Activated naive CD4-positive, alpha-beta T cell treated with anti-CD3 and anti-CD28 coated beads for 36 hours (primary cell): ENCODE measurements at regions of chr18 and their contacts with region 1.

Region 1: DNA sequence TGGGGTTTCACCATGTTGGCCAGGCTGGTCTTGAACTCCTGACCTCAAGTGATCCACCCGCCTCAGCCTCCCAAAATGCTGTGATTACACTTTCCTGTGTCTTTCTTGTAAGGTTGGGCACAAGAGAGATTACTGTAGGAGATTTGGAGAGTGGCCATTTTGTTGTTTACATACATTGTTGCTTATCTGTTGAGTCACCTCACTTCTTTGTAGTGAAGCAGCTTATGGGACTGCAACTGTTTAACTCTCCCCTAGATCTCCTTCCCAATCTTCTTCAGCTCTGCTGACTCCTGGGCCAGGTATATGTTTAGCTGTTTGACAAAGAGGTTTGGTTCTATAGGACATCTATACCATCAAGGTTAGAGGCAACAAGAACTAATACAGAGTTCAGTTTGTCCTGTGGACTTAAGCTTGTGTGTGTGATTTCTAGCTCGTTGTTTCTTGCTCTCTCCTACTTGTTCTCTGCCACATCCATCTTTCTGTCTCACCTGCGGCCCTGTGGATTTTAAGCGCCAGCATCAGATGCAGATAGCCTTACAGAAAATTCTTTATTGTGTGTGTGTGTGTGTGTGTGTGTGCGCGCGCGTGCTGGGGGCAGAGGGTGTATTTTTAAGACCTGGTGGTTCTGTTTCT is 95.4 kb downstream of the HAUS1 start:
- DNase-seq: no peak
- H3K4me3 Mint-ChIP-seq: no peak overlapping the region
- H3K27ac Mint-ChIP-seq: peak overlapping the region; percentile 0
- H3K4me1 Mint-ChIP-seq: peaks cover 67% of the 10 kb centered on the region
- H3K27me3 Mint-ChIP-seq: no peaks in the 10 kb centered on the region

Region 2: DNA sequence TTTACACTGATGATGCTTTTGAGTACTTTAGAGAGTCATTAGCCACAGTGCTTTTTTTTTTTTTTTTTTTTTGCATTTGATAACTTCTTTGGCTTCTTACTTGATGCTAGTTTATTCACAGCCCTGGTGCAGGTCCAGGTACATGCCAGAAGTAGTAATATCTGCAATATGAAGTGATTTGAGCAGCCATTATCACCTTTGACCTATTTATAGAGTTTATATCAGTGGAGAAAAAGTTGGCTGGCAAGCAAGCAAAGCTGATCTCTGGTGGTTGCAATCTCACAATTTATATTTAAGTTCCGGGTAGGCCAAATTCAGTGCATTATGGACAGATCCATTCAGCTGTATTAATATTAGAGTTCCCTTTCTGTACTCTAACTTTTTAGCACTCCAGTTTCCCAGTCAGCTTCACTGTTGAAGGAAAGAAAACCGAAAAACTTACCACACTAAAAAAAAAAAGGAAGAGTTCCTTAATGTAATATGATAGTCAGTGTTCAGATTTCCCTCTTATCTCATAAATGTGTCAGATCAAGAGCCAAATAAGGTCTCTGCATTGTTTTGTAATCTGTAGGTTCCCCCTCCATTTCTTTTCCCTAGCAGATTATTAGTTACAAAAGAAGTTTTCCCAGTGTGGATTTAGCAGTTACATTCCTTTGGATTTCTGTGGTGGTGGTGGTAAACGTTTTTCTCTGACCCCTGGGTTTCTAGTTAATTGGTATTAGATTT is 16.8 kb before region 1 on chr18:
- CTCF ChIA-PET with region 1: no interaction called
- intact Hi-C with region 1: loop called (anchors 2 kb)
- DNase-seq: no peak
- H3K4me3 Mint-ChIP-seq: no peak overlapping the region
- H3K27ac Mint-ChIP-seq: peak overlapping the region; percentile 1
- H3K4me1 Mint-ChIP-seq: peaks cover 60% of the 10 kb centered on the region
- H3K27me3 Mint-ChIP-seq: no peaks in the 10 kb centered on the region

Region 3: GRCh38 chr18:46281185-46282176 is 81.8 kb after region 1 on chr18:
- CTCF ChIA-PET with region 1: no interaction called
- intact Hi-C with region 1: no loop called
- DNase-seq: peak; percentile 78
- H3K4me3 Mint-ChIP-seq: no peak overlapping the region
- H3K27ac Mint-ChIP-seq: no peak overlapping the region
- H3K4me1 Mint-ChIP-seq: peaks cover 5% of the 10 kb centered on the region
- H3K27me3 Mint-ChIP-seq: no peaks in the 10 kb centered on the region